ENCODE measurements at regions of chr7 and their contacts with region 1.

Region 1: GRCh38 chr7:1412322-1413261 is 46.7 kb downstream of the MICALL2 start:
- DNase-seq: peak; percentile 63
- H3K4me3 ChIP-seq: no peak overlapping the region
- H3K27ac ChIP-seq: no peak overlapping the region
- H3K4me1 ChIP-seq: no peaks in the 10 kb centered on the region
- H3K27me3 ChIP-seq: peaks cover 2% of the 10 kb centered on the region
- CTCF ChIP-seq: peak; percentile 47 to 75

Region 2: GRCh38 chr7:1193593-1194424 is 218.8 kb before region 1 on chr7:
- CTCF ChIA-PET with region 1: no interaction called
- dilution Hi-C with region 1: no loop called
- in situ Hi-C with region 1: no loop called
- intact Hi-C with region 1: loop called (anchors 1 kb)
- DNase-seq: peak; percentile 39
- H3K4me3 ChIP-seq: no peak overlapping the region
- H3K27ac ChIP-seq: no peak overlapping the region
- H3K4me1 ChIP-seq: no peaks in the 10 kb centered on the region
- H3K27me3 ChIP-seq: no peaks in the 10 kb centered on the region
- CTCF ChIP-seq: peak; percentile 48 to 85

Region 3: DNA sequence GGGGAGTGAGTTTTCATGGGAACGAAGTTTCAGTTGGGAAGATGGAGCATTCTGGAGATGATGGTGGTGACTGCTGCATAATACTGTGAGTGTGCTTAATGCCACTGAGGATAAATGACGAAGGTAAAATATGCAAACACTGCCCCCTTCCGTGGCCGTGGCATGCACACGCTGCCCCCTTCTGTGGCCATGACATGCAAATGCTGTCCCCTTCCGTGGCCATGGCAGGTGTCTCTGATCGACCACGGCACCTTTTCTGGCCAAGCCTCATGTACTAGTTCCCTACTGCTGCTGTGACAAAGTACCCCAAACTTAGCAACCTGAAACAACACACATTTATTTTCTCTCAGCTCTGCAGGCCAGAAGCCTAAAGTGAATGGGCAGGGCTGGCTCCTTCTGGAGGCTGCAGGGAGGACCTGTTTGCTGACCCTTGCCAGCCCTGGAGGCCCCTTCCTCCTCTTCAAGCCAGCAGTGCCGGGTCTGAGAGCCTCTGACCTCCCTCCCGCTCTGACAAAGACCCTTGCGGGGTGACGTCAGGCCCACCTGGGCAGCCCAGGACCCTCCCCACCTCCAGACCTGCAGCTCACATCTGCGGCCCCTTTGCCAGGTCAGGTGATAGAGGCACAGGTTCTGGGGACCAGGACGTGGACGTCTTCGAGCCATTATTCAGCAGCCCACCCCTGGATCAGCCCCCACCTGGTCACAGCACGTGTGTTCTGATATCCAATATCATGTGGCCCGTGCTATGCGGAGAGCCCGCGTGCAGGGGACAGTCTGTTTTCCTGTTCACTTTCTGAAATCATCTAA is 35.3 kb before region 1 on chr7:
- CTCF ChIA-PET with region 1: no interaction called
- dilution Hi-C with region 1: no loop called
- in situ Hi-C with region 1: no loop called
- intact Hi-C with region 1: no loop called
- DNase-seq: no peak
- H3K4me3 ChIP-seq: no peak overlapping the region
- H3K27ac ChIP-seq: no peak overlapping the region
- H3K4me1 ChIP-seq: no peaks in the 10 kb centered on the region
- H3K27me3 ChIP-seq: no peaks in the 10 kb centered on the region
- CTCF ChIP-seq: no peak

Region 4: GRCh38 chr7:1440620-1441019 is 28.0 kb after region 1 on chr7:
- CTCF ChIA-PET with region 1: interaction called, 20 read pairs
- dilution Hi-C with region 1: no loop called
- in situ Hi-C with region 1: no loop called
- intact Hi-C with region 1: no loop called
- DNase-seq: no peak
- H3K4me3 ChIP-seq: no peak overlapping the region
- H3K27ac ChIP-seq: no peak overlapping the region
- H3K4me1 ChIP-seq: no peaks in the 10 kb centered on the region
- H3K27me3 ChIP-seq: no peaks in the 10 kb centered on the region
- CTCF ChIP-seq: no peak